AG04449 (cell line): ENCODE measurements at regions of chr3 and their contacts with region 1.

Region 1: GRCh38 chr3:48400824-48401433 is 28.9 kb downstream of the FBXW12 start:
- DNase-seq: no peak
- H3K4me3 ChIP-seq: no peak overlapping the region
- CTCF ChIP-seq: peak; percentile 64

Region 2: GRCh38 chr3:48151058-48151806 is 249.7 kb before region 1 on chr3:
- CTCF ChIA-PET with region 1: no interaction called
- POLR2A ChIA-PET with region 1: no interaction called
- DNase-seq: no peak
- H3K4me3 ChIP-seq: no peak overlapping the region
- CTCF ChIP-seq: peak; percentile 90

Region 3: DNA sequence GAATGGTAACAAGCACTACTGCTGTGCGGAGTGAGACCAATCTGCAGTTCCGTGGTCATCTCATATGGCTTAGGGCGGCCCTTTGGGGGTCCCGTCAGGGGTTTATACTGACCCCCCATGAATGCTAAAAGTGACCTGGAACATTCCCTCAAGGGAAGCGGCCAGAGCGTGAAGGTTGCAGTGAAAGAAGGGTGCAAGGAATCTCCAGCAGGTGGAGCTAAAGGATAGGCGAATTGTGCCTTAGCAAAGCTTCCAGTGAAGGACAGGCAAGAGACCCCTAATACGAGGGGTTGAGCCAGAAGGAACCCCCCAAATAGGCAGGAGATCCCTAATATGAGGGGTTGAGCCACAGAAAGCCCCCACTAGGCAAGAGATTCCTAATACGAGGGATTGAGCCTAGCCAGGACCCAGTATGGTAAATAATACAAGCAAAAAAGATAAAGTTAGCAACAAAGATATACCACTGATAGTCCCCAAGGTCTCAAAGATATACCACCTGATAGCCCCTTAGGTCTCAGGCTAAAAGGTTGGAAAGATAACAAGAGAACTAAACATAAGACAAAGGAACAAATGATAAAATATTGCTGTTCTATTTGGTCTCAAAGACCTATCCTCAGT is 127.2 kb before region 1 on chr3:
- CTCF ChIA-PET with region 1: interaction called, 48 read pairs
- POLR2A ChIA-PET with region 1: no interaction called
- DNase-seq: no peak
- H3K4me3 ChIP-seq: no peak overlapping the region
- CTCF ChIP-seq: peak; percentile 76

Region 4: DNA sequence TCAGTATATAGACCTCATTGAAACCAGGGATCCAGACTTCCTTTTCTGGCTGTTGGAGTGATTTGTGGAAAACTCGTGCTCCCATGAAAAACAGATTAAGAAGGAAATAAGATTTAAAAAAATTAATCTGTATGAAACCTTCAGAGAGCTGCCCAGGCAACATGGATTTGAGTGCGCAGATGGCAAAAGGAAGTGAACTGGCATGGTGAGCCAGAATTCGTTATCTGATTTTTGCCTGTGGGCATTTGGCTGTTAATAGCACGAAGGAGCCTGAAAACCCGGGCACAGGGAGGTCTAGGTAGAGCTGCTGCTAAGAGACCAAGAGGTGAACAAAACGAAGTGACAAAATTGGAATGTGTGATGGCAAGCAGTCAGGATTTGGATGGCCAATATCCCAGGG is 48.4 kb before region 1 on chr3:
- CTCF ChIA-PET with region 1: interaction called, 12 read pairs
- POLR2A ChIA-PET with region 1: no interaction called
- DNase-seq: no peak
- H3K4me3 ChIP-seq: no peak overlapping the region
- CTCF ChIP-seq: no peak

Region 5: DNA sequence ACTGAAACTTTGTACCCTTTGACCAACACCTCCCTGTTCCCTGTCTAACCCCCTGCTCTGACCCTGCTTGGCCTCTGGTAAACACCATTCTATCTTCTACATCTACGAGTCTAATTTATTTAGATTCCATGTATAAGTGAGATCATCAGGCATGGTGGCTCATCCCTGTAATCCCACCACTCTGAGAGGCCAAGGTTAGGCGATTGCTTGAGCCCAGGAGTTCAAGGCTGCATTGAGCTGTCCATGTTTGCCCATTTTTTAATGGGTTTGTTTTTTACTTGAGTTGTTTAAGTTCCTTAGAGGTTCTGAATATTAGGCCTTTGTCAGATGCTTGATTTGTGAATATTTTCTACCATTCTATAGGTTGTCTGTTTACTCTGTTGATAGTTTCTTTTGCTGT is 12.0 kb before region 1 on chr3:
- CTCF ChIA-PET with region 1: interaction called, 54 read pairs
- POLR2A ChIA-PET with region 1: no interaction called
- DNase-seq: no peak
- H3K4me3 ChIP-seq: no peak overlapping the region
- CTCF ChIP-seq: no peak

Region 6: GRCh38 chr3:48472915-48473616 is 72.1 kb after region 1 on chr3:
- CTCF ChIA-PET with region 1: interaction called, 10 read pairs
- POLR2A ChIA-PET with region 1: no interaction called
- DNase-seq: peak; percentile 45
- H3K4me3 ChIP-seq: peak overlapping the region; percentile 85
- CTCF ChIP-seq: peak; percentile 46

Region 7: GRCh38 chr3:48556793-48557626 is 156.1 kb after region 1 on chr3 and contains the start of gene PFKFB4:
- CTCF ChIA-PET with region 1: interaction called, 19 read pairs
- POLR2A ChIA-PET with region 1: no interaction called
- DNase-seq: peak; percentile 93
- H3K4me3 ChIP-seq: peak within 1 kb of the TSS; percentile 86
- CTCF ChIP-seq: peak; percentile 1

Region 8: DNA sequence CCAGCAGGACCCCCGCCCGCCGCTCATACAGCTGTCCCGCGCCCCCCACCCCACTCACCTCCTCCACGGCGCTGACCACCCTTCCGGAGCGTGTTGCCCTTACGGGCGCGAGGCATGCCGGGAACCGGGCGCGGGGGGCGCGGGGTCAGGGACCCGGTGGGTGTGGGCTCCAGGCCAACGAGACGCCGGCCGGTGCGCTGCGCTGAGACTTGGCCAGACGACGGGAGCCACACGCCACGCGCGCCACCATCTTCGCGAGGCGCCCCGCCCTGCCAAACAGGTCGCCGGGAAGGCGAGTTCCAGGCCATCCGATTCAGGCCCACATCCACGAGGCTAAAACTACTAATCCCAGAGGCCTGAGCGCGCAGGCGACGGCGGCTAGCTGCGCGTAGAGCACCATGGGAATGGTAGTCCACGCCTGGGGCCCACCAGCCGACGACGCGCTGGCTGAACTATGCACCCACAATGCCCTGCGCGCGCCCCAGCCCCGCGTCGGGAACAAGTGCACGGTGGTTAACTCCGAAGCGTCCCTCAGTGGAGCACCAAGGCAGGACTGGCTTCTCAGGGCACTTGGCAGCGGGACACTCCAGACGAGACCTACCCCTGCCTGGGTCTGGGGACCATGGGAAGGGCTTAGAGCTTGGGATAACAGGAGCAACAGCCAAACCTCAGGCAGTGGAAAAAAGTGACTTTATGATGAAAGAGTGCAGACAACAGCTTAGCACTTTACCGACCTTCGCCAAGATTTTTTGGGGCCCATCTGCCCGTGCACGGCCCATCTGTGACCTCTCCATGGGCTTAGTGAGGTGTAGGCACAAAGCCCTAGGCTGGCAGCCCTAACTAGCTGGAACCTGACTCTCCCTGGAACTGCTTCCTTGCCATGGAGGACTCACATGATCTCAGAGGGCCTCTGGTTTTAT is 1891.5 kb after region 1 on chr3 and contains the start of gene IFRD2:
- CTCF ChIA-PET with region 1: no interaction called
- POLR2A ChIA-PET with region 1: no interaction called
- DNase-seq: peak; percentile 79
- H3K4me3 ChIP-seq: peak within 1 kb of the TSS; percentile 87
- CTCF ChIP-seq: no peak